ENCODE measurements at regions of chr1 and their contacts with region 1.

Region 1: DNA sequence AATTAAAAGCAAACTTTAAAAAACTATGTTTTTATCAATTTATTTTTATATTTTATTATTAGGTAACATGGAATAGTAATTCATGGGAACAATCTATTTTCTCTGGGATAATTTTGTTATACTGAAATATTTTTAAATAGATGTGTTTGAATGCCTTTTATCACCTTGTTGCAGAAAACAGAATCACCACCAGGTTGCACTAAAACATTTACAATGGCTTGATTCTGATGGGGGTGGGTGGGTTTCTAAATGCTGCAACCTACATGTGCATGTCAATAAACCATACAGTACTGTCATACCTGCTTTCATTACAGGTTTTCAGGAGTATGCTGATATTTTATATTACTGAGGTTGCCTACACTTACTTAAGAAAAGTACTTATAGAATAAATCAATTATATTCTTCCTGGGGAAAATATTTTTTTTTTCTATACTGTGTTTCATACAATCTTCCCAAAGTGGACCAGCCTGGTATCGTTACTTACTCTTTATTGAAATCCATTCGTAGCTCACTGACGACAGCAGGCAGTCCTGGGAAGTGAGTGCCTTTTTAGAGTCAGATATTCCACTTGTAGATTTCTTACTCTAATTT is 132.8 kb downstream of the PTPRC start:
- DNase-seq: no peak
- H3K4me3 Mint-ChIP-seq: no peak overlapping the region
- H3K27ac Mint-ChIP-seq: no peak overlapping the region
- H3K4me1 Mint-ChIP-seq: peaks cover 11% of the 10 kb centered on the region
- H3K27me3 Mint-ChIP-seq: peaks cover 8% of the 10 kb centered on the region

Region 2: GRCh38 chr1:198788561-198789064 is 17.0 kb after region 1 on chr1:
- intact Hi-C with region 1: no loop called
- DNase-seq: no peak
- H3K4me3 Mint-ChIP-seq: no peak overlapping the region
- H3K27ac Mint-ChIP-seq: no peak overlapping the region
- H3K4me1 Mint-ChIP-seq: peaks cover 9% of the 10 kb centered on the region
- H3K27me3 Mint-ChIP-seq: no peaks in the 10 kb centered on the region

Region 3: DNA sequence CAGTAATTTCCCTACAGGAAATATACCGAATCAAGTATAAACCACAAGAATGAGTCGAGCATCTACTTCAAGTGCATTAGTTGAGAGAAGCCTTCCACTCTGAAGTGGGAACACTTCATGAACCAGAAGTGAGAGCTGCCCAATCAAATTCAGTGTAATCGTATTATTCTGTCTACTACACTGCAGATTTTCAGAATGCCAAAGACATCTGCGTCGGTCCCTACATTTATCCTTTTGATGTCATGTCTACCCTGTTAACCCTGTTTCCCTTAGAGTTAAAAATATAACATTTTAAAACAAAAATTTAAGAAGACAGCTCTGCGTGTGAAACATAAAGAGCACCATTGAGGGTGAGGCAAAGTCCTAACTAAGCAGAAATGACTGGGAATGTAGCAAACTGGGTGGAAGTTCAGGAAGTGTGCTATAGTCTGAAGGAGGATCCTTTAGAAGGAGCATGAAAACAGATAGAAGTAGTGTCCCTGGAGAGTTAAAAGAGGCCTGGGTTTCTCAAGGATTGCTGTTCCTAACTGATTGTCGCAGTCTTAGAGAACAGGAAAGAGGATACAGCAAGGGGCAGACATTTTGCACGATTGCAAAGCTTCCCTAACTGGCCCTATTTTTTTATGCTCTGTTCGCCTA is 158.4 kb after region 1 on chr1:
- intact Hi-C with region 1: loop called (anchors 10 kb)
- DNase-seq: no peak
- H3K4me3 Mint-ChIP-seq: peak overlapping the region; percentile 82
- H3K27ac Mint-ChIP-seq: peak overlapping the region; percentile 86
- H3K4me1 Mint-ChIP-seq: peaks cover 48% of the 10 kb centered on the region
- H3K27me3 Mint-ChIP-seq: no peaks in the 10 kb centered on the region

Region 4: GRCh38 chr1:199113265-199113869 is 341.7 kb after region 1 on chr1:
- intact Hi-C with region 1: loop called (anchors 1 kb)
- DNase-seq: peak; percentile 49
- H3K4me3 Mint-ChIP-seq: no peak overlapping the region
- H3K27ac Mint-ChIP-seq: no peak overlapping the region
- H3K4me1 Mint-ChIP-seq: peaks cover 11% of the 10 kb centered on the region
- H3K27me3 Mint-ChIP-seq: no peaks in the 10 kb centered on the region

Region 5: DNA sequence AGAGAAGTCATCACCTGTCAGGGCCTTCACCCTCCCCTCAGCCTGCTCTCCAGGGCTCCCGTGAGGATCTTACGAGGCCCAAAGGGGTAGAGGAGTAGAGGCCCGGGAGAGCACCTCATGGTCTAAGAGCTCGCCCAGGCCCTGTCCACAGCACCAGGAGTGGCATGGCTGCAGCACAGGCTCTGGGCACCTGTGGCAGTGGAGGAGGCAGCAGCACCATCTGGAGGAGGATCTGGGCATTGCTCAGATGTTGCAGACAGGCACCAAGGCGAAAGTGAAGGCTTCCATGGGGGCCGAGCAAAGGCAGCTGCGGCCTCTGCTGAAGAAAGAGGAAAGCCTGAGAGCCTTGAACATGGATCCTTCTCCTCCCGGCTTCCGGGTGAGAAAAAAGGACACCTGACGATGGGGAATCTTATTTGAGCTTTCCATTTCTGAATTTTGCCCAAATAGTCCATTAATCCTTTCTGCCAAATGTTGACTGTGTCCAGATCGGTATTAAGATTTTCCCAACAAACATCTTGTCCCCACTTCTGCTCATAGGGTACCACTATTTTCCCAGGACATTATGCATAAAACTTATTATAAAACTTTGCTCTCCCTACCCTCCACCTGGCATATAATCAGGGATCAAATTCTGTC is 471.9 kb after region 1 on chr1:
- intact Hi-C with region 1: loop called (anchors 1 kb)
- DNase-seq: peak; percentile 67
- H3K4me3 Mint-ChIP-seq: no peak overlapping the region
- H3K27ac Mint-ChIP-seq: no peak overlapping the region
- H3K4me1 Mint-ChIP-seq: peaks cover 9% of the 10 kb centered on the region
- H3K27me3 Mint-ChIP-seq: peaks cover 36% of the 10 kb centered on the region

Region 6: DNA sequence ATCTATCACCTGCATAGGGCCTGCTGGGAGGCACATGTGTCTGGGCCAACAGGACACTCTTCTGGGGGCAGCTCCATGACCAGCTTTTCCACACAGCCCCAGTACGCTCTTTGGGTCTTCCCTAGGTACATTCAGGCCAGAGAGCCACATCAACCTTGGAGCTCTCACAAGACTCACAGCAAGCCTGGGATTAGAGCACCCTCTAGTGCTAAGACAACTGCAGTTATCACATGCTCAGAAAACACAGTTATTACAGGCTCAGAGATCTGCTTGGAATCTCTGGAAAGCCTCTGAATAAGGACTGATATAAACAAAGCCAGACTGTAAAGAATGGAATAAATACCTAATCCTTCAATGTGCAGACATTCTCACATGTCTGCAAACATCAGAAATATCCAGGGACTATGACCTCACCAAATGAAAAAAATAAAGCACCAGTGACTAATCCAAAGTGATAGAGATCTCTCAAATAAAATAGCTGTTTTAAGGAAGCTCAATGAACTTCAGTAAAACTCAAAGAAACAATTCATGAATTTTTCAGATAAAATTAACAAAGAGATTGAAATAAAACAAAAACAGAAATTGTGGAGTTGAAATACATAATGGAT is 692.0 kb after region 1 on chr1:
- intact Hi-C with region 1: loop called (anchors 2 kb)
- DNase-seq: no peak
- H3K4me3 Mint-ChIP-seq: no peak overlapping the region
- H3K27ac Mint-ChIP-seq: no peak overlapping the region
- H3K4me1 Mint-ChIP-seq: no peaks in the 10 kb centered on the region
- H3K27me3 Mint-ChIP-seq: peaks cover 3% of the 10 kb centered on the region

Measured in activated T-helper 2 cell treated with anti-CD3 and anti-CD28 coated beads, Interferon-gamma antibody, Interleukin-2, Interleukin-4, amounts not matched to agents 10 μg/mL and 5 μg/mL and 100 μg/mL, durations not matched to agents 14 hours and 24 hours and 36 hours (primary cell).